ENCODE measurements at regions of chr12 and their contacts with region 1.

Region 1: GRCh38 chr12:45268672-45269411 is 52.9 kb downstream of the ANO6 start:
- DNase-seq: peak in 1 of 2 experiments; percentile 62
- H3K4me3 ChIP-seq: no peak overlapping the region
- H3K4me3 Mint-ChIP-seq: no peak overlapping the region
- H3K27ac Mint-ChIP-seq: peak overlapping the region; percentile 13
- H3K4me1 ChIP-seq: peaks cover 62% of the 10 kb centered on the region
- H3K4me1 Mint-ChIP-seq: peaks cover 48% of the 10 kb centered on the region
- H3K27me3 ChIP-seq: no peaks in the 10 kb centered on the region
- H3K27me3 Mint-ChIP-seq: no peaks in the 10 kb centered on the region
- CTCF ChIP-seq: peak; percentile 45 to 63

Region 2: GRCh38 chr12:45343269-45344051 is 74.6 kb after region 1 on chr12:
- CTCF ChIA-PET with region 1: no interaction called
- POLR2A ChIA-PET with region 1: no interaction called
- intact Hi-C with region 1: loop called (anchors 2 kb)
- DNase-seq: peak; percentile 47 to 53
- H3K4me3 ChIP-seq: no peak overlapping the region
- H3K4me3 Mint-ChIP-seq: peak overlapping the region; percentile 8
- H3K27ac Mint-ChIP-seq: peak overlapping the region; percentile 45
- H3K4me1 ChIP-seq: peaks cover 28% of the 10 kb centered on the region
- H3K4me1 Mint-ChIP-seq: peaks cover 21% of the 10 kb centered on the region
- H3K27me3 ChIP-seq: no peaks in the 10 kb centered on the region
- H3K27me3 Mint-ChIP-seq: no peaks in the 10 kb centered on the region
- CTCF ChIP-seq: no peak

Region 3: GRCh38 chr12:45615268-45615667 is 346.4 kb after region 1 on chr12:
- CTCF ChIA-PET with region 1: no interaction called
- POLR2A ChIA-PET with region 1: no interaction called
- intact Hi-C with region 1: no loop called
- DNase-seq: no peak
- H3K4me3 ChIP-seq: no peak overlapping the region
- H3K4me3 Mint-ChIP-seq: no peak overlapping the region
- H3K27ac Mint-ChIP-seq: no peak overlapping the region
- H3K4me1 ChIP-seq: no peaks in the 10 kb centered on the region
- H3K4me1 Mint-ChIP-seq: peaks cover 6% of the 10 kb centered on the region
- H3K27me3 ChIP-seq: no peaks in the 10 kb centered on the region
- H3K27me3 Mint-ChIP-seq: no peaks in the 10 kb centered on the region
- CTCF ChIP-seq: no peak

Measured in Caco-2 (cell line).